ENCODE measurements at regions of chr1 and their contacts with region 1.

Region 1: GRCh38 chr1:168234846-168235547 is 9.2 kb downstream of the SFT2D2 start:
- DNase-seq: peak; percentile 51
- H3K4me3 Mint-ChIP-seq: peak overlapping the region; percentile 53
- H3K27ac Mint-ChIP-seq: peak overlapping the region; percentile 94
- H3K4me1 Mint-ChIP-seq: peaks cover 70% of the 10 kb centered on the region
- H3K27me3 Mint-ChIP-seq: no peaks in the 10 kb centered on the region

Region 2: DNA sequence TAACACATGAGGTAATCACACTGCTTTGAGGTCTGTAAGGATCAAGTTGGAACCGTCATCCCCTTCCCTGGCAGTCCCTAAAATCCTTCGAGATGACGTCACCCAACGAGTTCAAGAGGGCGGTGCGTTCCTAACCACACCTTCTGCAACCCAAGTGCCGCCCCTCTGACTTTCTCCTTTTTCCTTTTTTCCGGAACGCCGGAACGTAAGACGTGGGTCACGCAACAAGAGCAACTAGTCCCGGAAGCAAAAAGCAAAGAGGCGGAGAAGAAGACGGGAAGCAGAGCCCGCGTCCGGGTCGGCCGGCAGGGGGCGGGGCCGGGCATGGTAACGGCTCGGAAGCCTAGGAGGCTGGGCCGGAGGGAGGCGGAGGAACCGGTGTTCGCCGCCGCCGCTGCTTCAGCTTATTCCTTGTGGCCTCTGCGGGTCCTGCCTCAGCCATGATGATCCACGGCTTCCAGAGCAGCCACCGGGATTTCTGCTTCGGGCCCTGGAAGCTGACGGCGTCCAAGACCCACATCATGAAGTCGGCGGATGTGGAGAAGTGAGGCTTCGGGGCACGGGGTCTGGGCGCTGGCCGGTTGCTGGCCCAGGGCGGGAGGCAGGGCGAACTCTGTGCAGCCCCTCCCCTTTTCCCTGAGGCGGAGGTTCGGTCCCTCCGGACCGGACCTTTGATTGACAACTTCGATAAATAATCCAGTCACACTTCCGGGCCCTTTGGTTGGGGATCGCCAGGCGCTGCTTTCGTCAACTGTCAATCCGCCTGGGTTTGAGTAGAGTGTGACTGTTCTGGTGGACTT is 56.2 kb before region 1 on chr1 and contains the start of gene TIPRL:
- intact Hi-C with region 1: loop called (anchors 1 kb)
- DNase-seq: peak; percentile 93
- H3K4me3 Mint-ChIP-seq: no peak within 1 kb of the TSS
- H3K27ac Mint-ChIP-seq: no peak within 1 kb of the TSS
- H3K4me1 Mint-ChIP-seq: peaks cover 8% of the 10 kb centered on the region
- H3K27me3 Mint-ChIP-seq: peaks cover 4% of the 10 kb centered on the region
- total RNA-seq, gene TIPRL: 59.9 and 63.4 TPM in 2 replicates

Region 3: DNA sequence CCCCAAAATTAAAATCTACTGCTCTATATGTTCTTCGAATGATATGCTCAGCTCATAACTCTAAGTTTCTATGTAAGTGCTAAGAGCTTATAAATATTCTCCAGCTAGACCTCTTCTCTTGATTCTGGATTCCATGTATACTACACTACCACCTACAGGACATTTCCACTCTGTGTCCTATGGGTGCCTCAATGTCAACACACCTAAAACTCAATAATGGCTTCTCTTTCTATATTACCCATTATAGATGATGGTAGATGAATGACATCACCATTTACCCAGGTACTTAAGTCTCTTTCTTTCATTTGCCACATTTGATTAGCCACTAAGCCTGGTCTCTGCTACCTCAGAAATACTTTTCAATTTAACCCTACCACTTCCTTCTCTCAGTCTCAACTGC is 86.9 kb after region 1 on chr1:
- intact Hi-C with region 1: loop called (anchors 2 kb)
- DNase-seq: no peak
- H3K4me3 Mint-ChIP-seq: no peak overlapping the region
- H3K27ac Mint-ChIP-seq: peak overlapping the region; percentile 8
- H3K4me1 Mint-ChIP-seq: peaks cover 47% of the 10 kb centered on the region
- H3K27me3 Mint-ChIP-seq: no peaks in the 10 kb centered on the region

Region 4: GRCh38 chr1:168466092-168466713 is 231.2 kb after region 1 on chr1:
- intact Hi-C with region 1: loop called (anchors 2 kb)
- DNase-seq: no peak
- H3K4me3 Mint-ChIP-seq: no peak overlapping the region
- H3K27ac Mint-ChIP-seq: peak overlapping the region; percentile 76
- H3K4me1 Mint-ChIP-seq: peaks cover 58% of the 10 kb centered on the region
- H3K27me3 Mint-ChIP-seq: no peaks in the 10 kb centered on the region

Region 5: DNA sequence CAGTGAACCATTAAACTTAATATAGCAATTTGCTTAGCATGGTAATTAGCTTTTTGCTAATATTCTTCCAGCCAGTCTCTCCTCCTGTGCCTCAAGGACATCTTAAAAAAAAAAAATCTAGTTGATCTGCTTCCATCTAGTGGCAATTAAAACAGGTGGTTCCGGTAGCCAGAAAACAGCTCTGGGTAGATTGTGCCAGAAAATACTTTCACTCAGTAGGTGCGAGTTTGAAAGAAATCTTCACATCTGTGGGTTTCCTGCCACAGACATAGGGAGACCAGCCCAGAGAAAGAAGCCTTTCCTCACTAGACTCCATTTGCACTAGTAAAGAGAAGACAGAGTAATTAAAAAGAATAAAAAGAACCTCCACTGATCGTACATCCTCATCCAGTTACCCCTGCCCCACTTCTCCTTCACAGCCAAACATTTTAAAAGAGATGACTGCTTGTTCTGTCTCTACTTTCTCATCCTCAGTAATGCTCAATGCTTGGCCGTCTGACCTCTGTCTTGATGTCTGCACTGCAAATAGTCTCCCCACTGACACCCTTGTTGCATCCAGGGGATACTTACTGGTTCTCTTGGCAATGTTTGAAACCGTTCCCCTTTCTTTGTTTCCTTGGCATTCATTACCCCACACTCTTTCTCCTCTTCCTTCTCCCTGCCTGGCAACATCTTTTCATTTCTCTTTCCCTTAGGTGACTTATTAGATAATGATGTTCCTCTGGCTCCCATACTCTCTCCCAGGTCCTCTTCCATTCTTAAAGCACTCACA is 1459.5 kb after region 1 on chr1:
- intact Hi-C with region 1: loop called (anchors 10 kb)
- DNase-seq: peak; percentile 55
- H3K4me3 Mint-ChIP-seq: peak overlapping the region; percentile 28
- H3K27ac Mint-ChIP-seq: peak overlapping the region; percentile 84
- H3K4me1 Mint-ChIP-seq: peaks cover 94% of the 10 kb centered on the region
- H3K27me3 Mint-ChIP-seq: no peaks in the 10 kb centered on the region